AG04449 (cell line): ENCODE measurements at regions of chr19 and their contacts with region 1.

Region 1: DNA sequence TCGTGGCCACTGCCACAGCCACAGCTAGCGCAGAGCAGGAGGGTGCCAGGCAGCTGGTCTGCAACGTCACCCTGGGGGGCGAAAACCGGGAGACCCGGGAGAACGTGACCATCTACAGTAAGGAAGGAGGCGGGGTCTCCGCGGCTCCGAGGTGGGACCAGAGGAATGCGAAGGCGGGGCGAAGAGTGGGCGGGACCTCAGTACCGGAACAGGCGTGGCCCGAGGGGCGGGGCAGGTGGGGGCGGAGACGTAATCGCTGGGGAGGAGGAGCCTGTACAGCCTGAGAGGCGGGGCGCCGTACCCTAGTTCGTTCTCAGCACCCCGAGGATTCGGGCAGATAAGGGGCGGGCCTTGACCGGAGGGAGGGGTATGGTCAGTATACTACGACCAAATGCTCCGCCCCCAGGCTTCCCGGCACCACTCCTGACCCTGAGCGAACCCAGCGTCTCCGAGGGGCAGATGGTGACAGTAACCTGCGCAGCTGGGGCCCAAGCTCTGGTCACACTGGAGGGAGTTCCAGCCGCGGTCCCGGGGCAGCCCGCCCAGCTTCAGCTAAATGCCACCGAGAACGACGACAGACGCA is 2.5 kb downstream of the ICAM5 start:
- DNase-seq: no peak
- H3K4me3 ChIP-seq: peak overlapping the region; percentile 60
- CTCF ChIP-seq: no peak

Region 2: GRCh38 chr19:10243606-10244005 is 48.7 kb before region 1 on chr19:
- CTCF ChIA-PET with region 1: no interaction called
- POLR2A ChIA-PET with region 1: no interaction called
- DNase-seq: no peak
- H3K4me3 ChIP-seq: no peak overlapping the region
- CTCF ChIP-seq: no peak

Region 3: GRCh38 chr19:10305139-10305806 is 13.0 kb after region 1 on chr19:
- CTCF ChIA-PET with region 1: interaction called, 6 read pairs
- POLR2A ChIA-PET with region 1: interaction called, 15 read pairs
- DNase-seq: no peak
- H3K4me3 ChIP-seq: no peak overlapping the region
- CTCF ChIP-seq: no peak

Region 4: DNA sequence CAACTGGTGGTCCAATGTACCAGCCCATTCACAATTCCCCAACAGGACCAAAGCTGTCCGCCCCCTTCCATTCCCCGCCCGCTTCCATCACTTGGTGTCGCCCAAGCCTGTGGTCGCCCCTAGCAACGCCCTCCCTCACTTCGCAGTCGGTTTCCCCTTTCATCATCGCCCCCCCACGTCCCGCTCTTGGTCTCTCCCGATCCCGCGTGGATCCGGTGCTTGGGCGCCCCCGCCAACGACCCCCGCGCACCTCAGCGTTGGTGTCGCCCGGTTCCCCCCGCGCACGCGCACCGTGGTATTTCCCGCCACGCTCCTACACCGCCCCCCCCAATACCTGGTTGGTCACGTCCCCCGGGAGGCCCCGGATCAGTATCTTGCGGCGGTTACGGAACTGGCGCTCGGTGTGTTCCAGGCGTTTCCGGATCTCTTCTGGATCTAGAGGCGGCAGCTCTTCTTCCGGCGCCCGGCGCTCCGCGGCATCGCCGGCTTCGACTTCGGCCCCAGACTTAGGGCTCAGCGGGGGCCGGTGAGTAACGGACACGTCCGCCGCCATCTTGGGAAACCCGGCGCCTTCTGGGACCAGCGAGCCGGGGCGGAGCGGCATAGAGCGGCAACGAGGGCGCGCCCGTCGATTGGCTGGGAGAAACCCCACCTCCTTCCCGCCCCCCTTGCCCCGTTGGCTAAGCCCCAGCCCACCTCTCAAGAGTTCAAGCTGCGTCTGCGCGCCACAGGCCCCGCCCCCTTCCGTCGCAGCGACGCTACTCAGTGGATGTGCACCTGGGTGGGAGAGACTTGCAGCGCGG is 40.9 kb after region 1 on chr19 and contains the start of gene RAVER1:
- CTCF ChIA-PET with region 1: interaction called, 5 read pairs
- POLR2A ChIA-PET with region 1: interaction called, 10 read pairs
- DNase-seq: peak; percentile 67
- H3K4me3 ChIP-seq: peak within 1 kb of the TSS; percentile 87
- CTCF ChIP-seq: no peak